ENCODE measurements at regions of chr10 and their contacts with region 1.

Region 1: DNA sequence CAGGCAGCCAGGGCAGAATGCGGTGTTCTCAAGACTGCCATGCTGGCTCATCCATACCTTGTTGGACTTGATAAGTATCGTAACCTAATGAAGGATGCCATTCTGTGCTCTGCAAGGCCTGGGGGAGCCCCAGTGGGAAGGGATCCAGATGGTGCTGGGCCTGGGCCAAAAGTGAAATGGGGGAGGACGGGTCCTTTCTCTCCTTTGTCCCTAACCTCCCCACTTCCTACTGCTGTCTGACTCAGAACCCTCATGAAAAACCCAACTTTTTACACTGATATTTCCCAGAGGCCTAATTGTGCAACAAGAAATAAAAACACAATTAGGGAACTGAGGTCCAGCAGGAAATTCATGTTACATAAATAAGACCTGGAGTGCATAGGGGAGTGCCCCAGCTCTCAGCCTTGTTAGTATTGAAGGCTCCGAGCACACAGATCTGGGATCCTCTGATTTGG is 193.7 kb upstream of the SVIL start:
- DNase-seq: no peak
- ATAC-seq: no peak

Region 2: DNA sequence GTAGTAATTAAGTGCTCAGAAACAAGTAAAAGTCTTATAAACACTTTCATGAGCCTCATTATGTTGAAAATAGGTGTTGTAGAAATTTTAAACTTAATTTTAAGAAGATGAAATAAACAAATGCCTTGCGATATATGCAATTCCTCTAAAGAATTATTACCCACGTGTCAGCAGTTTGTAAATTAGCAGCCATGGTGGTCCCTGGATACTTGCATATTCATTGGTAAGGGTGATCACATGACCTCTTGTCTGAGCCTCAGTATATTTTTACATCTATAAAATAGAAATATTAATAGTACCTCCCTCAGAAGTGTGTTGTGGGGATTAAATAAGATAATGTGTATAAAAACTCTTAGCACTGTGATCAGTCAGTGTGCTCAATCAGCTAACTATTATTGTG is 52.2 kb before region 1 on chr10:
- intact Hi-C with region 1: loop called (anchors 5 kb)
- DNase-seq: no peak
- ATAC-seq: no peak

Region 3: DNA sequence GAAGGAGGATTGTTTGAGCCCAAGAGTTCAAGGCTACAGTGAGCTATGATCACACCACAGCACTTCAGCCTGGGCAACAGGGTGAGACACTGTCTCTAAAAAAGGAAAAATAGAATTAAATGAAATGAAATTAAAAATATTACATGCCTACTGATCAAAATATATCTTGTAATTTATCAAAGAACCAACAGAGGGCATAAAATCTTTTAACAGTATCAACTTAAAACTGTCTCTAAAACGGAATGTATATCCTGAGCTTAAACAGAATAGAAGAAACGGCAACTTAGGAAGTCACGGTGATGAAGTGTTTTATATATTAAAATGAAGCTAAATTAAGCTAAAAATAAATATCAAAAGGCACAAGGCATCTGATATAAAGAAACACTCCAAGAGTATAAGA is 441.8 kb after region 1 on chr10:
- intact Hi-C with region 1: no loop called
- DNase-seq: no peak
- ATAC-seq: no peak